ENCODE measurements at regions of chr17 and their contacts with region 1.

Region 1: DNA sequence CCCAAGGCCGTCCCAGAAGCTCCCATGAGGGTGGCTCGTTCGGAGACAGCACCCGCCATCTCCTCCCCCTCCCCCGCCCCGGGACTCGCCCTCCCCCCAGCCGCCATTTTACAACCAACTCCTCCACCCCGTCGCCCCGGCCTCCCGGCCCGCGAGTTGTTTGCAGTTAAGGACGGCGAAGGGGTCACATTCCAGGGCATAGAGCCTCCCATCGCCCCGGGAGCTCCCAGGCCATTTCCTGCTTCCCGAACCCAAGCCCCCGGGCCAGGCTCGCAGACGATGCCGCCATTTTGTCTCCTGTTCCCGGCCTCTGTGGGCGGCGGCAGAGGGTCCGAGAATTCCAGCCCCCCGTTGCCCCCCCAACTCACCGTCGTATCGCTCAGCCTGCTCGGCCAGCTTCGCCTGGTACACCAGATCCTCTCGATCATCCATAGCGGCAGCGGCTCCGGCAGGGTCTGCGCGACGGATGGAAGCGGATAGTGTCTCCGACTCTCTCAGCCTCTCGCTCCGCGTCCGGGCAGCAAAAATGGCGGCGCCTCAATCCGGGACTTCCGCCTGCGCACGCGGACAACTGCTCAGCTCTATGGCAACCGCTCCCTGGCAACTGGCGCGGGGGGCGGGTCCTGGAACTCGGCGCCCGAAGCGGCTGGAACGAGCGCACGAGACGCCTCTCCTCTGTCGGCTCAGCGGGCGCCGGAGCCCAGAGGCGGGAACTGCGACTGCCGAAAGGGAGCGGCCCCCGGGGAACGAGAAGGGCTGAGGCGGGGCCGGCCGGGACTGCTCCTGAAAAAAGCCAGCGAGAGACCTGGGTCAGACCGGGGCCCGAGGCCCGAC is at the start of gene YWHAE:
- DNase-seq: peak; percentile 96
- H3K4me3 ChIP-seq: peak within 1 kb of the TSS; percentile 53 to 99 (median 77)
- H3K27ac ChIP-seq: peak within 1 kb of the TSS; percentile 86
- H3K4me1 ChIP-seq: peaks cover 17% of the 10 kb centered on the region
- H3K27me3 ChIP-seq: peaks cover 0 to under 1% of the 10 kb centered on the region in 2 experiments
- CTCF ChIP-seq: no peak
- POLR2A ChIP-seq: peak; percentile 91
- total RNA-seq, gene YWHAE: 819 and 848 TPM in 2 replicates

Region 2: DNA sequence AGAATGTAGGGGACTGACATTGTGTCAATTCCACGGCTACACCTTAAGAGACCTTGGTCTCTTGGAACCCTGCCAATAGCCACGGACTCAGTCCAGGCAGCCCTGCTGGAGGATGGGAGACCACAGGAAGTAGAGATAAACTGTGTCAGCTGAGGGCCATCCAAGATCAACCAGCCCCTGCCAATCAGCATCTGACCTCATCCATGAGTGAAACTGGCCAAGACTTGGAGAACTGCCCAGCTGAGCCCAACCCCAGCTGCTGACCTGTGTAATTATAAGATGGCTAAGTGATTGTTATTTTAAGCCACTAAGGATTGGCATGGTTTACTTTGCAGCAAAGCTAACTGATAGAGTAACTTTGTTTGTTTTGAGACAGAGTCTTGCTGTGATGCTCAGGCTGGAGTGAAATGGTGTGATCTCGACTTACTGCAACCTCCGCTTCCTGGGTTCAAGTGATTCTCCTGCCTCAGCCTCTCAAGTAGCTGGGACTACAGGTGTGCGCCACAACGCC is 13.4 kb after region 1 on chr17:
- CTCF ChIA-PET with region 1: interaction called, 4 read pairs
- POLR2A ChIA-PET with region 1: interaction called, 3 read pairs
- dilution Hi-C with region 1: no loop called
- intact Hi-C with region 1: loop called (anchors 1 kb)
- DNase-seq: peak; percentile 97
- H3K4me3 ChIP-seq: no peak overlapping the region
- H3K27ac ChIP-seq: no peak overlapping the region
- H3K4me1 ChIP-seq: peaks cover 12% of the 10 kb centered on the region
- H3K27me3 ChIP-seq: no peaks in the 10 kb centered on the region
- CTCF ChIP-seq: no peak
- POLR2A ChIP-seq: no peak

Region 3: DNA sequence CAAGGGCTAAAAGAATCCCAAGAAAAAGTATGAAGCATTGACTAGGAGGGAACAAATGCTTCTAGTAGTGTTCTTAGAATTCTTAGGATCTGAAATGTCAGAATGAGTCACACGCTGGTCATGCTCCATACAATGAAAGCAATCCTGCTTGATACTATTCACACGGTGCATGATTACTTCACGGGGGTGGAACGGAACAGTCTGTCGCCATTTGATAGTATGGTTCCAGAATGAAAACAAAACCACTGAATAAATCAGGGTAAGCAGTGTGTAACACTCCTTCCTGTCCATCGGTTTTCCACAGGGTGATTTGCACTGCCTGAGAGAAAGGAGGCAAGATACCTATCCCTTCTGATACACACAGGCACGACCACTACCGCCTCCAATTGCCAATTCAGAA is 23.0 kb after region 1 on chr17:
- CTCF ChIA-PET with region 1: interaction called, 4 read pairs
- POLR2A ChIA-PET with region 1: no interaction called
- dilution Hi-C with region 1: no loop called
- intact Hi-C with region 1: loop called (anchors 1 kb)
- DNase-seq: peak; percentile 98
- H3K4me3 ChIP-seq: peak overlapping the region in 1 of 3 experiments; percentile 3
- H3K27ac ChIP-seq: peak overlapping the region; percentile 90
- H3K4me1 ChIP-seq: peaks cover 25% of the 10 kb centered on the region
- H3K27me3 ChIP-seq: no peaks in the 10 kb centered on the region
- CTCF ChIP-seq: no peak
- POLR2A ChIP-seq: no peak

Region 4: DNA sequence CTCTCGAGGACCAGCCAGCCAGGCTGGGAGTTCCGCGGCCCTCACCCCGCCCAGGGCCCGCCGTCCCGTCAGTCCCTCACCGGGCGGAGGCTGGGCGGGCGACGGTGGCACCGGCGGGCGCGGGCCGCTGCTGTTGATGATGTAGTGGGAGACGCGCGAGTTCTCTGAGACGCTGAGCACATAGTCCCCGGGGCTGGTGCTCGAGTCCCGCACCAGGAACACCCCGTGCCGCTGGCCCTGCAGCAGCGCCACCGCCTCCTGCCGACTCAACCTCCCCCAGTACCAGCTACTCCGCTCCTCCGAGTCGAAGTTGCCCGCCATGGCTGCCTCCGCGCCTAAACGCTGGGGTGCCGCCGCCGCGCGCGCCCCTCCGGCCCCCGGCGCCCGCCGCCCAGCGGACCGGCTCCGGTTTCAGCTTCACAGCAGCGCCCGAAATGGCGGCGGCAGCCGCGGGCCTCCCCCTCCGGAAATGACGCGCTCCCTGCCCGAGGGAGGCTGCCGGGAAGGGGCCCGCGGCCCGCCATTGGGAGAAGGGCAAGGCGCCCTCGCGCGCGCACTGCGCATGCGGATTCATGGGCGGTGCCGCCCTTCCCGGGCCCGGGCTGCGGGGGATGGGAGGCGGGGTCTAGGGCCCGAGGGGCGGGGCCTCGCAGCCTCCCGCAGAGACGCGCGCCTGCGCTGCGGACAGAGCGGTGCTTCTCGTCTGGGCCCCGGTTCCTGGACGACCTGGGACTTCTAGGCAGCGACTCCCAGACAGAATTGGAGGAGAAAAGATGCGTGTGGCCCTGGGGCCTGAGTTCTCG is 56.1 kb after region 1 on chr17 and contains the start of gene CRK:
- CTCF ChIA-PET with region 1: no interaction called
- POLR2A ChIA-PET with region 1: interaction called, 3 read pairs
- dilution Hi-C with region 1: no loop called
- intact Hi-C with region 1: loop called (anchors 1 kb)
- DNase-seq: peak; percentile 97
- H3K4me3 ChIP-seq: peak within 1 kb of the TSS; percentile 83 to 95 (median 89)
- H3K27ac ChIP-seq: peak within 1 kb of the TSS; percentile 91
- H3K4me1 ChIP-seq: peaks cover 18% of the 10 kb centered on the region
- H3K27me3 ChIP-seq: no peaks in the 10 kb centered on the region
- CTCF ChIP-seq: no peak
- POLR2A ChIP-seq: peak; percentile 98
- total RNA-seq, gene CRK: 67.2 and 71.3 TPM in 2 replicates